Kidney (tissue), 22 donors: ENCODE measurements at regions of chr17 and their contacts with region 1.

Region 1: DNA sequence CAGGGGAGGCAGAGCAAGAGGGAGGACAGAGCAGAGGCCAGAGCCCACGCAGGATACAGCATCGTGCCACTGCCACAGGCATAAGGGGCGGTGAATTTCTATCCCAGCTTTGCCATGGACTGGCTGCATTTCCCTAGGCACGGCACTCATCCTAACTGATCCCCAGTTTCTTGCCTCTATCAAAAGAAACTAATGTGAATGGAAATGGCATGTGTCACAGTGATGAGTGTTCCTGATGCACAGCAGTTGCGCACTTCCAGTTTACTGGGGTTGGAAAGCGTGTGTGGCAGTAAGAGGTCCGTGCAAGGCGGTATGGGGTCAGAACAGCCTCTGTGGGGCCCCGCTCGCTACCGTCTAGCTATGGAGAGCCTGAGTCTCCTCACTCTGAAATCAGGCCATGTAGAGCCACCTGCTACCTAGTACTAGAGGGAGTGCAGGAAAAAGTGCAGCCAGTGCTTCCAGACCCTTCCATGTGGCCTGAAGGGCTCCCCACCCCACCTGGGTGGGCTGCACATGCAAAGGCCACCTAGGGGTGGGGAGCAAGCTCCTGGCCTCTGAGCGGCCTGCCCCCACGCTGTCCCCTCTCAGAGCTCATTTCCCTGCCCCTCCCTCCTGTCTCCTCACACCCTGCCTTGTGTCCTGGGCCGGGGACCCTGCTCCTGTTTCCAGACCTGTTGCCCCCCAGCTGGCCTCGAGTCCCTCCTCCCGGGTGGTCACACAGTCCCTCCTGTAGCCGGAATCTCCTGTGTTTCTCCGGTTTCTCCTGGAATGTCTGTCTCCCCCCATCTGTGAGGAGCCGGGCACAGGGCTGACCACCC is 5.0 kb upstream of the KCNJ18 start:
- DNase-seq: peak in 1 of 5 donors; percentile 65
- H3K4me3 ChIP-seq: no peak overlapping the region
- H3K27ac ChIP-seq: no peak overlapping the region
- H3K4me1 ChIP-seq: no peaks in the 10 kb centered on the region
- H3K27me3 ChIP-seq: no peaks in the 10 kb centered on the region
- CTCF ChIP-seq: no peak

Region 2: DNA sequence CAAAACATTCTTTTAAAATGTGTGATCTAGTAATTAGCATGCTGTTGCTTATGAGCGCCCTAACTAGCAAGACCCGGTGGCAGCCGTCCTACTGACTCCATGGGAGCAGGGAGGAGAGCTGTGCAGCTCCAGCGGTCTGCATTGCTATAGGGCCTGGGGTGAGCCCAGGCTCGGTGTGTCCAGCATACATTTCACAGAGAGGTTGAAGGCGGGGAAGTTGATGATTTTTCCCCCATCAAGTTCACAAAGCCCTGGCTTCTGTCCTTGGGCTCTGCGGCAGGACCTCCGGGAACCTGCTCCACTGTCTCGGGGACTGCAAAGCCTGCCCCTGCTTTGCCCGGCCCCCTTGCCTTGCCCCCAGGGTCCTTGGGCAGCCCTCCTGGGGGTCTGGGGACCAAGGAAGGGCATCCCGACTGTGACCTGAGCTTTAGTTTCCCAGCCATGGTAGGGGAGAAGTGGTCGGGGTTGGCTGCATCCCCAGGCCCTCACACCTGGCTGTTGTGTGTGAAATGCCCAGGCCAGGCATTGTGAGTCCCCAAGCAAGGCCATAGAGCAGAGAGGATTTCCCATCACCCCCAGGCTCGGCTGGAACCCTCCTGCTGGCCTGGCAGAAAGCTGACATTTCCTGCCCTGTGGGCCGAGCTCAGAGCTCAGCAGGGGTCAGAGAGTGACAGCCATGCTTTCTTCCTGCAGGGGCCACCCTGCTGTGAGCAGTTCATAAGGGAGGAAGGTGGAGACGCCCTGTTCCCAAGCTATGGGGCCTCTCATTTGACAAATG is 286.3 kb before region 1 on chr17:
- intact Hi-C with region 1: loop called (anchors 2 kb)
- DNase-seq: no peak
- H3K4me3 ChIP-seq: no peak overlapping the region
- H3K27ac ChIP-seq: no peak overlapping the region
- H3K4me1 ChIP-seq: no peaks in the 10 kb centered on the region
- H3K27me3 ChIP-seq: no peaks in the 10 kb centered on the region
- CTCF ChIP-seq: no peak